GM13976 (cell line): ENCODE measurements at regions of chr17 and their contacts with region 1.

Region 1: DNA sequence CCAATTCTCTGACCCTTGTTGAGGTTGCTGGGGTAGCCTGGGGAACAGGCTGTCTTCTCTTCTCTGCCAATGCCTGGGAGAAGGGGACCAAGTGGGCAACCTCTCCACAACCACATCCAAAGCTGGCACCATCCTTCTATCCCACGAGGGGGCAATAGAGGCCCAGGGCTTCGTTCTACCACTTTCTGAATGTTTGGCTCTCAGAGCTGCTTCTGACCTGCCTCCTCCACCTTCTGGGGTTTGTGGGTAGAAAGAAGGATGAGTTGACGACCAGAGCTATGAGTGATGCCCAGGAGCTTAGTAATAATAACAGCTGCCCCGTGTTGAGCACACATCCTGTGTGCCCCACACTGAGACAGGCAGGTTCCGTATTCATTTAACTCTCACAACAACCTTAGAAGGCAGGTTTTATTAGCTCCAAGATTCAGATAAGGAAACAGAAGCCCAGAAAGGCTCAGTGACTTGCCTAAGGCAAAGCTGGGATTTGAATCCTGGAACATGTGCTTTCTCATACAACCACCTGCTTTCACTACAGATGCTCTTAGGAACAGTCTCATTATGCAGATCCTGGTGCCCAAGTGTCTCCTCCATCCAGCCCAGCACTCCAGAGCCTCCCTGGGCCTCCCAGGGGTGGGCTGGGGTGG is 11.1 kb downstream of the TSPOAP1 start:
- DNase-seq: peak; percentile 81
- CTCF ChIP-seq: peak; percentile 46

Region 2: DNA sequence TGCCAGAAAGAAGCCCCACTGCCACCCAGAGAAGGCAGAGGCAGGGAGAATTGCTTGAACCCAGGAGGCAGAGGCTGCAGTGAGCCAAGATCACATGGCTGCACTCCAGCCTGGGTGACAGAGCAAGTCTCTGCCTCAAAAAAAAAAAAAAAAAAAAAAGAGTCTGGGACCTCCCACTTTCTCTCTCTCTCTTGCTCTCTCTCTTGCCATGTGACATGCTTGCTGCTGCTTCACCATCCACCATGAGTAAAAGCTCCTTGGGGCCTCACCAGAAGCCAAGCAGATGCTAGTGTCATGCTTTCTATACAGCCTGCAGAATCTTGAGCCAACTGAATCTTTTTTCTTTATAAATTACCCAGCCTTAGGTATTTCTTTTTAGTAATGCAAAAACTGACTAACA is 289.0 kb before region 1 on chr17:
- in situ Hi-C with region 1: no loop called
- DNase-seq: no peak
- CTCF ChIP-seq: no peak

Region 3: DNA sequence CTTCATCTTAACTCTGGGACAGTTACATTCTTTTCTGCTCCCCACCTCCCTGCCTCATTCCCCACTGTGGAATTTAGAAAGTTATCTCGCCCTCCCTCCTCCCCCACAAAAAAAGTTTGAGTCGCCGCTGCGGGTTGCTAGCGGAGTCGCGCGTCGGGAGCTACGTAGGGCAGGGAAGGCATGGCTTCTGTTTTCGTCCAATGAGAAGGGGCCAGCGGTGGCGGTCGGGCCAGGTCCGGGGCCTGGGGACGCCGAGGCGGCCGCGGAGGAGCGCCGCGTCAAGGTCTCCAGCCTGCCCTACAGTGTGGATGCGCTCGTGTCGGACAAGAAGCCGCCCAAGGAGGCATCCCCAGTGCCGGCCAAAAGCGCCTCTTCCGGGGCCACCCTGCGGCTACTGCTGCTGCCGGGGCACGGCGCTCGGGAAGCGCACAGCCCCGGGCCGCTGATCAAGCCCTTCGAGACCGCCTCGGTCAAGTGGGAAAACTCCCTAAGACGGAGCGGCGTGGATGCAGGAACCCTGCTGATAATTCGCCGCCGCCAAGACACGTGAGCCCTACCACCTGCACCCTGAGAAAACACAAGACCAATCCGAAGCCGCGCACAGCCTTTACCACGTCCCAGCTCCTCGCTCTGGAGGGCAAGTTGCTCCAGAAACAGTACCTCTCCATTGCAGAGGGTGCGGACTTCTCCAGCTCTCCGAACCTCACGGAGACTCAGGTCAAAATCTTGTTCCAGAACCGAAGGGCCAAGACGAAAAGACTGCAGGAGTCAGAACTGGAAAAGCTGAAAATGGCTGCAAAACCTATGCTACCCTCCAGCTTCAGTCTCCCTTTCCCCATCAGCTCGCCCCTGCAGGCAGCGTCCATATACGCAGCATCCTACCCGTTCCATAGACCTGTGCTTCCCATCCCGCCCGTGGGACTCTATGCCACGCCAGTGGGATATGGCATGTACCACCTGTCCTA is 160.4 kb before region 1 on chr17:
- in situ Hi-C with region 1: no loop called
- DNase-seq: peak; percentile 38
- CTCF ChIP-seq: no peak

Region 4: DNA sequence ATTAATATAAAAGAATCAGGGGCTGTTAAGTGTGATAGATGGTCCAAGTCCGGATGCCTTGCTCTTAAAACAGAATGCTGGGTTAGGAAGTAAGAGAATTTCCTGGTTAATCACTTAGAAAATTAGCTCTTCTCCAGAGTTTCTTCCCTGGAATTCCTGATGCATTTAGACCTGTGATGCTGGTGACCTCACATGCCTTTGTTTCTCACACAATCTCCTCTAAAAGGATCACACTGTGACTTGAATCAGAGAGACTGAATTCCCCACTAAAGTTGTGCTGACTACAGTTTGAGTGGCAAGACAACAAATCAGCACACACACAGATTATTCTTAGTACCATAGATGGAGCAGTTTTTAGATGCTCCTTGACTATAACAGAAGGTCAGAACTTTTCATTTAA is 104.2 kb after region 1 on chr17:
- in situ Hi-C with region 1: loop called (anchors 10 kb)
- DNase-seq: no peak
- CTCF ChIP-seq: no peak